ENCODE measurements at regions of chr11 and their contacts with region 1.

Region 1: DNA sequence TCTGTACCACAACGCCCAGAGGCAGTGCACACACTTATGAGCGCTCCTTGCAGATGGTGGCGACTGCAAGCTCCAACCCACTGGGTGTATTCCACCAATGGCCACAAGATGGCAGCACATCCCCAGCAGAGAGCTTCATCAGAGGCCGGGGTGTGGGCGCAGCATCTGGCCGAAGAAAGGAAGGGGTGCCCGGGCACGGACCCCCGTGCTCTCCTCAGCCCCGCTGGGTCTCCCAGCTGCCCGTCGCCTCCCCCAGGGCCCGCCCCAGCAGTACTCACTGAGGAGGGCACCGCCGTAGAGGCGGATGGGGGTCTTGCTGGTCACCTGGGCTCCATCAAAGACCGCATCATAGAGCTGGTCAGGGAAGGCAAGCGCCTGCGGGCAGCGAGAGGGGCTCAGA is 14.2 kb downstream of the TP53I11 start:
- DNase-seq: peak; percentile 87
- ATAC-seq: peak; percentile 61

Region 2: DNA sequence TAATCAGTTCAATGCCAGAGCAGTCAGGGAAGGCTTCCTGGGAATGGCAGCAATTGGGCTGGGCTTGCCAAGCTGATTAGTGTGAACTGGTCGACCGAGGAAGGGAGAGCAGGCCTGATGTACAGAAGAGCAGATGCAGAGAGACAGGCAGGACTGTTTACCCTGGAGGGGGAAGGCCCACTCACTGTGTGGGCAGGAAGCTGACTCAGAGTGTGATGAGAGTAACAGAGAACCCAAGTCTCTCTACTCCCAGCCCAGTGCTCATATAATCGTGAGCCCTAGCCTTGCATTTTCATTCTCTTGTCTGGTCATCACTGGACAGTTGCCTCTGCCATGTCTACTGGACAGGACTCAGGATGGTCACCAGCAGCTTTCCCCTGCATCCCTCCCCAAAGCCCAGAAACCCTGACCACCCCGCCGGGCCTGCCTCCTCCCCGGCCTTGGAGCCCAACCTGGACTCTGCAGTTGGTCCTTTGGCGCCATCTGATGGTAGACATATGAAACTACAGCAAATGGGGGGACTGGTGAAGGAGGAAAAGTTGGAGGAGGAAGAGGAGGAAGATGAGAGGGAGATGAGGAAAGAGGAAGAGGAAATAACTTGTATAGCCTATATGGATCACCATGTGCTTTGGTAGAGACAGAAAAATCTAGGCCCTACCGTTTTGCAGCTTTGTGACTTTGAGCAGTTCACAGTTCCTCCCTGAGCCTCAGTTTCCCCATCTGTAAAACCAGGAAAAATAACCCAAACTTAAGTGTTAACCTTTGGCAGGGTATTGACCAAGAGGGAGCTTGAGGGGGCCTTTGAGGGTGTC is 166.5 kb after region 1 on chr11:
- intact Hi-C with region 1: loop called (anchors 2 kb)
- DNase-seq: peak; percentile 61
- ATAC-seq: peak; percentile 70

Region 3: DNA sequence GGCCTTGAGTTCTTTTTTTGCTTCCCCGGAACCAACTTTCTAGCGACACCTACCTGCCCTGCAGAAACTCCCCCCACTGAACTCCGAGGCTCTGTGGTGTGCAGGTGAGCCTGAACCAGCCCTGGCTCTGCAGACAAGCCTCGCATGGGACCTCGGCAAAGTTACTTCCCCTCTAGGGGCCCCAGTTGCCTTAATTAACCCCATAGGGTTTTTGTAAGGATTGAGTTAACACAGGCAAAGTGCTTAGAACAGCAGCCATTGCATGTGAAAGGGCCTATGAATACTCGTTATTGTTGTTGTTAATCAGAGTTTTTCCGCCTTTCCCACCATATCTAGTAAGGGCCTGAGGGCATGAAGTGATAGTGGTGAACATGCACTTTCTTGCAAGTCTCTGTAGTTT is 362.2 kb after region 1 on chr11:
- intact Hi-C with region 1: loop called (anchors 10 kb)
- DNase-seq: no peak
- ATAC-seq: no peak

Region 4: DNA sequence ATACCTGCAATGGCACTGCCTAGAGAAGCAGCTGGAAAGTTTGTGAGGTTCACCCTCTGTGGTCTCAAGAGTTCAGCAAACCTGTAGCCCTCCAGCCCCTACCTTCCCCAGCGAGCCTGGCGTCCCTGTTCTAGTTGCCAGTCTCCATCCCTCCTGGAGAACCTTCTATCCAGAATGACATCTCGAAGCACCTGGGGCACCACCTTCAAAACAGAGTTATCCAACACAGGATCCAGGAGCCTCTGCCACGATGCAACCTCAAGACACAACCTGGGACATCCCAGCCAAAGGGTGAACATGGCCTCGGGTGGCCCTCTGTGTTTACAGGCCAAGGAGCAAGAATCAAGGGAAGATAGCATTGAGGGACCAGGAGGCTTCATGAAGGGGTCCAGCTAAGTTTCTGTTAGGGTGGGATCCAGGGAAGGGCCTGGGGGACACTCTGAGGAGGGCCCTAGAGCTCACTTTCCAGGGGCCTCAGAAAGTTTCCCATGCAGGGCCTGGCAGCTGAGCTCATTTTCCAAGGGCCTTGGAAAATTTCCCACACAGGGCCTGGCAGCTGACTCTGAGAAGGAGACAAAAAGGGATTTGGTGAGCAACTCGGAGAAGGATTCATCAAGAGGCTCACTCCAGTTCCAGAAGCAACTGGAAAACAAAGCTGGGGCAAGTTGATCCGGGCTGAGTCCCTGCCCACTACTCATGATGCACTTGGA is 386.5 kb after region 1 on chr11:
- intact Hi-C with region 1: loop called (anchors 10 kb)
- DNase-seq: no peak
- ATAC-seq: peak; percentile 65